Activated naive CD4-positive, alpha-beta T cell treated with anti-CD3 and anti-CD28 coated beads for 36 hours (primary cell): ENCODE measurements at regions of chr11 and their contacts with region 1.

Region 1: GRCh38 chr11:5684646-5685362 is at the start of gene TRIM5:
- DNase-seq: peak; percentile 92
- H3K4me3 Mint-ChIP-seq: peak within 1 kb of the TSS; percentile 96
- H3K27ac Mint-ChIP-seq: peak within 1 kb of the TSS; percentile 95
- H3K4me1 Mint-ChIP-seq: peaks cover 42% of the 10 kb centered on the region
- H3K27me3 Mint-ChIP-seq: no peaks in the 10 kb centered on the region
- total RNA-seq, gene TRIM5: 37.2 to 38.0 TPM

Region 2: DNA sequence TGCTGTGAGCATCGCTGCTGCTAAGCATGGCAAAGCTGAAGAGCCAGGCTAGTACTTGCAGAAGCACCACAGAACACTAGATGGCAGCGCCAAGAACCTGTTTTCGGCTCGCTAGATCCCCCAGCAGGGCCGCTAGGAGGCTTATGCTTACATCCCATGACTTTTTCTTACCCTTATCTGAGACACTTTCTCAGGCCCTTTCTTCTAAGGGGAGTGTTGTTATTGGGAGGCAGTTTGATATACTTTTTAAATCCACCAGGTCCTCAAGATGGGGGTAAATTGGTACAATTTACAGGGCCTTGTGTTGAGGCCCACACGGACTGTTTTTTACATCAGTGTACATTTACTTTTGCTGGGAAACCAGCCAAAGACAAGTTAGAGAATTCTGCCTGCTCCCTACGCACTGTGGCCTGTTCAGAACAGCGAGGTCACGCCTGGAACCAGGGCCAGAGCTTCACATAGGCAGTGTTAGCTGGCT is 84.4 kb before region 1 on chr11:
- CTCF ChIA-PET with region 1: interaction called, 3 read pairs
- intact Hi-C with region 1: loop called (anchors 2 kb)
- DNase-seq: peak; percentile 79
- H3K4me3 Mint-ChIP-seq: no peak overlapping the region
- H3K27ac Mint-ChIP-seq: no peak overlapping the region
- H3K4me1 Mint-ChIP-seq: peaks cover 6% of the 10 kb centered on the region
- H3K27me3 Mint-ChIP-seq: no peaks in the 10 kb centered on the region

Region 3: GRCh38 chr11:5712507-5712906 is 27.7 kb after region 1 on chr11:
- CTCF ChIA-PET with region 1: interaction called, 5 read pairs
- intact Hi-C with region 1: loop called (anchors 1 kb)
- DNase-seq: no peak
- H3K4me3 Mint-ChIP-seq: no peak overlapping the region
- H3K27ac Mint-ChIP-seq: peak overlapping the region; percentile 7
- H3K4me1 Mint-ChIP-seq: peaks cover 3% of the 10 kb centered on the region
- H3K27me3 Mint-ChIP-seq: no peaks in the 10 kb centered on the region

Region 4: GRCh38 chr11:6389921-6390724 is 705.3 kb after region 1 on chr11 and contains the start of gene SMPD1:
- CTCF ChIA-PET with region 1: no interaction called
- intact Hi-C with region 1: loop called (anchors 1 kb)
- DNase-seq: peak; percentile 95
- H3K4me3 Mint-ChIP-seq: peak within 1 kb of the TSS; percentile 91
- H3K27ac Mint-ChIP-seq: peak within 1 kb of the TSS; percentile 98
- H3K4me1 Mint-ChIP-seq: peaks cover 46% of the 10 kb centered on the region
- H3K27me3 Mint-ChIP-seq: no peaks in the 10 kb centered on the region
- total RNA-seq, gene SMPD1: 24.5 to 27.5 TPM

Region 5: GRCh38 chr11:6682936-6683861 is 998.4 kb after region 1 on chr11 and contains the start of gene MRPL17:
- CTCF ChIA-PET with region 1: no interaction called
- intact Hi-C with region 1: loop called (anchors 5 kb)
- DNase-seq: peak; percentile 100
- H3K4me3 Mint-ChIP-seq: peak within 1 kb of the TSS; percentile 97
- H3K27ac Mint-ChIP-seq: peak within 1 kb of the TSS; percentile 98
- H3K4me1 Mint-ChIP-seq: peaks cover 35% of the 10 kb centered on the region
- H3K27me3 Mint-ChIP-seq: no peaks in the 10 kb centered on the region
- total RNA-seq, gene MRPL17: 99.7 to 102 TPM